Activated CD4-positive, alpha-beta memory T cell treated with anti-CD3 and anti-CD28 coated beads for 36 hours (primary cell): ENCODE measurements at regions of chr1 and their contacts with region 1.

Region 1: DNA sequence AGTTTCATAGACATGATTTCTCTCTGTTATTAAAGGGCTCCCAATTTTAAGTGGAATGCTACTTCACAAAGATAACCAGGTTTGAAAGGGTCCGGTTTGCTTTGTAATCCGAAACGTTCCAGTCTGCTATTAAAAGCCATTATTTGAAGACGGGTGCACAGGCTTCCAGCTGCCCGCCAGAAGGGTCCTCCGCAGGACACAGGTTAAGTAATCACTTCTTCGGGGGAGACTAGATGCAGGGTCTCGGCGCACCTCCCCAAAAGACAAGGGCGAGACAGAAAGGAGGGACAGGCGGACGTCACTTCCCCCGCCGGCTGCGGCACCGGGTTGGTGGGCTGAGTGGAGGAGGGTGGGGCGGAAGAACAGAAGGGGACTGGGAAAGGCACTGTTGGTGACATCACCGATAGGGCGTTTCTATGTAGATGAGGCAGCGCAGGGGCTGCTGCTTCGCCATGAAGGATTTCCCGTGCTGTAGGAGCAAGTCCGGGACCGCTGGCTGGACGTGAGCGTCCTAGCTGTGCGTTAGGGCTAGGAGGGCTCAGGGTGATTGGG is 8.9 kb downstream of the RNU1-2 start:
- DNase-seq: peak; percentile 100
- H3K4me3 Mint-ChIP-seq: no peak overlapping the region
- H3K27ac Mint-ChIP-seq: no peak overlapping the region
- H3K4me1 Mint-ChIP-seq: peaks cover 25% of the 10 kb centered on the region
- H3K27me3 Mint-ChIP-seq: no peaks in the 10 kb centered on the region

Region 2: DNA sequence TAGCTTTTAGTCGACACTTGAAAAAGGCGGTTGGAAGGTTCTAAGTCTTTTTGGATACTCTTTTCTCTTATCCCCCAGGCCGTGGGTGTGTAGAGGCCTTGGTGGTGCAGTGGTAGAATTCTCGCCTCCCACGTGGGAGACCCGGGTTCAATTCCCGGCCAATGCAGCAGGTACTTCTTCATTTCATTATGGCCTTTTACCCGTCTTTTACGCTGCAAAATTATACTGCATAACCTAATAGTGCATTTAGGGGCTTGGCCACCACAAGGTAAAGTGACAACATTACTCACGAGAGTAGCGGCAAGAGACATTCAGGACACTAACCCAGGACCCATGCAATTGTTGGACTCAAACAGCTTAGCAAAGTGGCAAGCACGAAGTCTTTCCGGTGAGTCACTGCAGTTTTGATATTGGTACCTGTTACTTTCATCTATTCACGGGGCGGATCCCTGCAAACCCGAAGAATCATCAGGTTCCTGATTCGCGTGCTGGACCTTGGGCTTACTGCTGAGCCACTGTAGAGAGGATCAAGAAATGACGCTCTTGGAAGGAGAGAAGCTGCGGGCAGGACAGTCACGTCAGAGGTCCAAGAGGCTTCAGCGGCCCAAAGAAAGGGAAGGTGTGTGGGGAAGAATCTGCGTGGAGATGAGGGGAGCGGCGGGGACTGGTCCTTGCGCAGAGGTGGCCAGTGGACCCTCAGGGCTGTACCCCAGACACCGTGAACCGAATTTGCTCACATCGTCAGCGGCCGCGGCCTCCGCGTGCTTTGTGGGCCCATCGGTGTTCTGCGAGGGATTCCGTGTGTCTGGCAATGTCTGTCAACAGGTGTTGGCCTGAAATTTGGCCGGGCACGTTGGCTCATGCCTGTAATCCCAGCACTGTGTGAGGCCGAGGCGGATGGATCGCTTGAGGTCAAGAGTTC is 177.2 kb before region 1 on chr1:
- CTCF ChIA-PET with region 1: no interaction called
- POLR2A ChIA-PET with region 1: interaction called, 9 read pairs
- intact Hi-C with region 1: loop called (anchors 10 kb)
- DNase-seq: peak; percentile 88
- H3K4me3 Mint-ChIP-seq: no peak overlapping the region
- H3K27ac Mint-ChIP-seq: no peak overlapping the region
- H3K4me1 Mint-ChIP-seq: peaks cover 2% of the 10 kb centered on the region
- H3K27me3 Mint-ChIP-seq: peaks cover 2% of the 10 kb centered on the region

Region 3: GRCh38 chr1:16888860-16889816 is 15.5 kb before region 1 on chr1:
- CTCF ChIA-PET with region 1: no interaction called
- POLR2A ChIA-PET with region 1: interaction called, 36 read pairs
- intact Hi-C with region 1: no loop called
- DNase-seq: peak; percentile 81
- H3K4me3 Mint-ChIP-seq: peak overlapping the region; percentile 84
- H3K27ac Mint-ChIP-seq: peak overlapping the region; percentile 80
- H3K4me1 Mint-ChIP-seq: peaks cover 17% of the 10 kb centered on the region
- H3K27me3 Mint-ChIP-seq: peaks cover 3% of the 10 kb centered on the region

Region 4: DNA sequence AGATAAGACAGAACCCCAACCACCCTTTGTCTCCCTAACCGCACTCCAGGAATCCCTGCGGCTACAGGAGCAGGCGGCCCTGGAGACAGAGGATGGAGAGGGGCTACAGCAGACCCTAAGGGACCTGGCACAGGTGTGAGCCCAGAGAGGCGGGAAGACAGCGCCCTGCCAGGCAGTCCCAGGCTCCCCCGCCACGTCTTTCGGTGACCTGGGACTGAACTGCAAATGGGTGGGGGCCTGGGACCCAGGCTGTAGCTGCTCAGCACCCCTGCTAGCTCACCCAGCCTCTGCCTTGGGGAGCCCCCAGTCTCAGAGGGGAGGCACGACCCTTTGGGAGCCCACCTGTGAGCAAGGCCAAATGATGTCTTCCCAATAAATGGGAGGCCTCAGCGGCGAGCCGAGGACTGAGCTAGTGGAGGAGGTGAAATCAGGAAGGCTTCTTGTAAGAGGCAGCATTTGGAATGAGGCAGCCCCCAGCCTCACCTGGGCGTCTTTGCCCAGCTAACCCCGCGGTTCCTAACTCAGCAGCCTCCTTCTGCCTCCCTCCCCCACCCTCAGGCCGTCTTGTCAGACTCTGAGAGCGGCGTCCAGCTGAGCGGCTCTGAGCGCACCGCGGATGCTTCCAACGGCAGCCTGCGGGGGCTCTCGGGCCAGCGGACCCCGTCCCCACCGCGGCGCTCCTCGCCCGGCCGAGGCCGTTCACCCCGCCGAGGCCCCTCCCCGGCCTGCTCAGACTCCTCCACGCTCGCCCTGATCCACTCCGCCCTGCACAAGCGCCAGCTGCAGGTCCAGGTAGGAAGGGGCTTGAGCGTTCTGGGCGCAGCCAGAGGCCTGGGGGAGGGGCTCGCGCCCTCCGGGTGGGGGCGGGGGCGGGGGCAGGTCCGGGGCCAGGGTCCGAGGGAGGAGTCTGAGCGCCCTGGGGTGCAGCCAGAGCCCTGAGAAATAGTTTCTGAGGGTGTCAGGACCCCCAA is 34.0 kb after region 1 on chr1:
- CTCF ChIA-PET with region 1: no interaction called
- POLR2A ChIA-PET with region 1: no interaction called
- intact Hi-C with region 1: no loop called
- DNase-seq: no peak
- H3K4me3 Mint-ChIP-seq: no peak overlapping the region
- H3K27ac Mint-ChIP-seq: no peak overlapping the region
- H3K4me1 Mint-ChIP-seq: no peaks in the 10 kb centered on the region
- H3K27me3 Mint-ChIP-seq: no peaks in the 10 kb centered on the region

Region 5: GRCh38 chr1:17053685-17054410 is 149.2 kb after region 1 on chr1 and contains the start of gene SDHB:
- CTCF ChIA-PET with region 1: no interaction called
- POLR2A ChIA-PET with region 1: interaction called, 7 read pairs
- intact Hi-C with region 1: loop called (anchors 5 kb)
- DNase-seq: peak; percentile 100
- H3K4me3 Mint-ChIP-seq: peak within 1 kb of the TSS; percentile 96
- H3K27ac Mint-ChIP-seq: peak within 1 kb of the TSS; percentile 90
- H3K4me1 Mint-ChIP-seq: peaks cover 24% of the 10 kb centered on the region
- H3K27me3 Mint-ChIP-seq: no peaks in the 10 kb centered on the region
- total RNA-seq, gene SDHB: 154 to 163 TPM

Region 6: DNA sequence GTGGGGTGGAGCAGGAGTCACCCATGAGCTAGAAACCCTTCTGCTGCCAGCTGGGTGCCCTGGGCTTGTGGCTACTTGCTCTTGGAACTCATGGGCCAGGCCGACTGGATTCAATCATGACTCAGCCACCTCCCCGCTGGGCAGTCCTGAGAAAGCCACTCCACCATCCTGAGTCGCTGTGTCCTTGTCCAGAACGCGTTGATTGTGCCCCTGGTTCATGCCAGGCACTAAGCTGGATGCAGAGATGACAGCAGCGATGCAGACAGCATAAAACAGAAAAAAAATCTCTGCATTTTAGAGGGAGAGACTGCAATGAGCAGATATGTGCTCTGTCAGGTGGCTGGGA is 310.9 kb after region 1 on chr1:
- CTCF ChIA-PET with region 1: no interaction called
- POLR2A ChIA-PET with region 1: no interaction called
- intact Hi-C with region 1: no loop called
- DNase-seq: no peak
- H3K4me3 Mint-ChIP-seq: no peak overlapping the region
- H3K27ac Mint-ChIP-seq: no peak overlapping the region
- H3K4me1 Mint-ChIP-seq: peaks cover 16% of the 10 kb centered on the region
- H3K27me3 Mint-ChIP-seq: peaks cover 34% of the 10 kb centered on the region

Region 7: DNA sequence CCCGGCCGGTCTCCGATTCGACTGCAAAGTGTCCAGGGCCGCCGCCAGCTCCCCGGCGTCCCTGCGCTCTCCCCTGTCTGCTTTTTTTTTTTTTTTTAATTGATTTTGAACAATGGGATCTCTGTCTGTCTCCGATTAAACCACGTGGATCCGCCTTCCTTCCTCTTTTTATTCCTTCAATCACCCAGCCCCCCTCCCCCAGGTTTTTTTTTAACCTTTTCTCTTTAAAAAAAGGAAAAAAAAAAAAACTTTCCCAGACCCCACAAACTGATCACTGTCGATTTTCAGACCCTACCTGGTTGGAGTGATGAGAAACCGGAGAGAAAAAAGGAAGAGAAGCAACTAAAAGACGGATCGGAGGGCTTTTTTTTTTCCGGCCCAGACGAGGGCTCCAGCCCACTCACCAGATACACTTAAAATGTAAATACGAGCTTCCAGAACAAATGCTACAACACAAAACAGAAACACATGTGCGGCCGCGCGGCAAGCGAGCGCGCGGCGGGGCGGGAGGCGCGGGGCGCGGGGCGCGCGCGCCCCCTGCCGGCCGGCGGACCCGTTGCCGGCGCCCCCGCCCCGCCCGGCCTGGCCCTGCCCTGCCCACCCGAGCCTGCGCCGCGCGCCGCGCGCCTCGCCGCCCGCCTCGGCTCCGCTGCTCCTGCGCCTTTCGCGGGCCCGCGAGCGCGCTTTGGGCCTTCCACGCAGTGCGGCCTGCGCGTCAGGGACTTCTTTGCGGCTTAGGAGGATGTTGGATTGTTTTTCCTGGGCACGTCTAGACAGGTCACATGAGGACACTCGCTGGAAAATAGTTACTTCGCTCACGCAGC is 534.8 kb after region 1 on chr1 and contains the start of gene RCC2:
- CTCF ChIA-PET with region 1: no interaction called
- POLR2A ChIA-PET with region 1: no interaction called
- intact Hi-C with region 1: loop called (anchors 2 kb)
- DNase-seq: peak; percentile 79
- H3K4me3 Mint-ChIP-seq: peak within 1 kb of the TSS; percentile 88
- H3K27ac Mint-ChIP-seq: peak within 1 kb of the TSS; percentile 95
- H3K4me1 Mint-ChIP-seq: peaks cover 43% of the 10 kb centered on the region
- H3K27me3 Mint-ChIP-seq: no peaks in the 10 kb centered on the region
- total RNA-seq, gene RCC2: 90.6 to 91.0 TPM